Right cardiac atrium (tissue), 5 donors: ENCODE measurements at regions of chr5 and their contacts with region 1.

Region 1: GRCh38 chr5:102865510-102866236 is 110.6 kb downstream of the PAM start:
- DNase-seq: peak; percentile 82 to 93 (median 90)
- ATAC-seq: peak; percentile 95 to 97
- H3K4me3 ChIP-seq: peak overlapping the region; percentile 87
- H3K27ac ChIP-seq: peak overlapping the region; percentile 98
- H3K4me1 ChIP-seq: no peaks in the 10 kb centered on the region
- H3K27me3 ChIP-seq: no peaks in the 10 kb centered on the region

Region 2: DNA sequence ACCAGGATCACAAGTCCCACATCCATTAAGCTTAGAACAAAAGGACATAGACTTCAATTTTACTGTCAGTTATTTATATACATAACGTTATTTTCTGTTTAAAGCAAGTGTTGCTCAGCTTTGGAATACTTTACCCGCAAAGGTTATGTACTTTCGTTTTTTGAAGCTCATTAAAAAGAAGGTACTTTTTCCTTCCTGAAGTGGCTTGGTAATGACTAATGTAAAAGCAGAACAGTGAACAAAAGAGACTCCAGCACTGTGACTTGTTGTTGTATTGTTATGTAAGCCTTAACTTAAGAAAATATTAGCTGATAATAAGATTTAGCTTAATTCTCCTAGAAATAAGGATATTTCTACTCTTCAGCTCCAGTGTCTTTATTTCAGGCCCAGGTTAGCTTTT is 269.6 kb before region 1 on chr5:
- intact Hi-C with region 1: loop called in 1 of 4 experiments (anchors 10 kb)
- DNase-seq: no peak
- ATAC-seq: no peak
- H3K4me3 ChIP-seq: no peak overlapping the region
- H3K27ac ChIP-seq: no peak overlapping the region
- H3K4me1 ChIP-seq: no peaks in the 10 kb centered on the region
- H3K27me3 ChIP-seq: no peaks in the 10 kb centered on the region

Region 3: DNA sequence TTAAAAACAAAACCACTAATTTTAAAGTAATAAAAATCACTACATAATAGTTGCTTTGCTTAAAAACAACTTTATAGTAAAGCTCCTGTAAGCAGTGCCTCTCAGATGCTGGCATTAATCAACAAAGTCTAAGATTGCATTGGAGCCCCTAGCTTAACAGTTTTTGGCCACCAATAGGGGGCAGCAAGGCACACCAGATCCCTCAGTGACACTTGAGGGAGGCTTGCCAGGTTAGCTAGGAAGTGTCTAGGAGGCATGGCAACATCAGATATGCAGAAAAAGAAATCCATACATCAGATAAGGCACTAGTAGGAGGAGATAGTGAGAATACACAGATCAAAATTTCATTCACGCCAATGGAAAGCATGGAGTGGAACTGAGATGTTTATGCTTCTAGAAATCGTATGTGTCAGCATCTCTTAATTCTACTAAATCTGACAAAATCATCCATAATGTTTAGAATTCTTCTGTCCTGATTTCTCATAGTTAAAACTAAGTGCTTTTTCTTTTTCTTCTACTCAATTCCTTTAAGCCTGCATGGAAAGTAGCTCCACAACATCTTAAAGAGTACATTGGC is 184.2 kb before region 1 on chr5:
- intact Hi-C with region 1: loop called in 1 of 4 experiments (anchors 5 kb)
- DNase-seq: peak; percentile 72 to 83 (median 74)
- ATAC-seq: peak; percentile 77 to 86
- H3K4me3 ChIP-seq: no peak overlapping the region
- H3K27ac ChIP-seq: no peak overlapping the region
- H3K4me1 ChIP-seq: no peaks in the 10 kb centered on the region
- H3K27me3 ChIP-seq: no peaks in the 10 kb centered on the region

Region 4: DNA sequence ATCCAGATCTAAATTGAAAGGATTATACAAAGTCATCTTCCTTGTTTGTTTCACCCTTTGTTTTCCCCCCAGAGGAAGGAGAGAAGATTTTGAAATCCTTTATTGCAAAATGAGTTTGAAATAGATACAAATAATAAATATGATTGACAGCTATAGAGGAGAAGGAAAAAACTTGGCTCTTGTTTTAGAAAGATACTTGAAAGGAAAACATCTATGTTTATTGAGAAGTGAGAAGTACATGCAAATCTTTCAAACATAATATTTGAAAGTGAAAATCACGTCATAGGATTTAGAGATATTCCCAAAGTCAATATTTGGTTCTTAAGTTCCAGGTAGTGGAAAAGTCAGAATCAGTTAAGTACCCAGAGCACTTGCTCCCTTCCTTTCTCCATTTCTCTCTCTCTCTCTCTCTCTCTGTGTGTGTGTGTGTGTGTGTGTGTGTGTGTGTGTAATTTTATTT is 83.3 kb before region 1 on chr5:
- intact Hi-C with region 1: loop called in 2 of 4 experiments (anchors 5 to 10 kb)
- DNase-seq: no peak
- ATAC-seq: no peak
- H3K4me3 ChIP-seq: no peak overlapping the region
- H3K27ac ChIP-seq: no peak overlapping the region
- H3K4me1 ChIP-seq: peaks cover 5% of the 10 kb centered on the region
- H3K27me3 ChIP-seq: no peaks in the 10 kb centered on the region

Region 5: DNA sequence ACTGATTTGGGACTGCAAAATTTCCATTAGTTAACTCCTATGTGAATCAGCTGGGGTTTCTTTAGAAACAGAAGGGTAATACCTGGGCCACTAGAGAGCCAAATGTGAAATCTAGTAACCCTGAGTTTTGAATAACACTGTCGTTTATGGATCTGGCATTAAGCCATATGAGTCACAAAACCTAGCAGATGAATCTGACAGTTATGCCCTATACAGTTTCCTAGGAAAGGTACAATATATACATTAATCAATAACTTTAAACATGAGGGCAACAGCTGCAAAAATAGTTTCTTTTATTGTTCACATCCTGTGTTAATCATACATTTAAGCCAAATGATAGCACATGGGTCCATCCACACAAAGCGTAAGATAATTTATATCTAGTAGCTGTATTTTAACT is 53.7 kb before region 1 on chr5:
- intact Hi-C with region 1: loop called in 1 of 4 experiments (anchors 10 kb)
- DNase-seq: no peak
- ATAC-seq: no peak
- H3K4me3 ChIP-seq: no peak overlapping the region
- H3K27ac ChIP-seq: no peak overlapping the region
- H3K4me1 ChIP-seq: peaks cover 1% of the 10 kb centered on the region
- H3K27me3 ChIP-seq: no peaks in the 10 kb centered on the region

Region 6: DNA sequence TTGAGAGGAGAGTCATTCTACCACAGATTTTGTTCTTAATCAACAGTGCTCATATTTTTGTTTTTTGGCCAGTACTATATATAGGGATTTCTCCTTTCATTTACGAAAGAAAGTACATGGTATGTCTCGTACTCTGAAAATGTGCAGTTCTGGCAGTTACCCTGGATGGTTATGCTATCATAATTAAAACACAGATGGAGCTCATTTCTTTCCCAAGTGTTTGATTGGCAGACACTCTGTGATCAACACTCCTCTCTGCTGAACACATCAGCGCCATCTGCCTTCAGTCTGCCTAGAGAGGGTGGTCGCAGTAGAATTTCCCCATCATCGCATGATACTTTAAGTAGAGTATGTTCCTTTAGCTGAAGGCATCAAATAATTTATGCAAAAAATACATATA is 46.0 kb before region 1 on chr5:
- intact Hi-C with region 1: loop called in 2 of 4 experiments (anchors 2 to 10 kb)
- DNase-seq: no peak
- ATAC-seq: no peak
- H3K4me3 ChIP-seq: no peak overlapping the region
- H3K27ac ChIP-seq: no peak overlapping the region
- H3K4me1 ChIP-seq: peaks cover 3% of the 10 kb centered on the region
- H3K27me3 ChIP-seq: no peaks in the 10 kb centered on the region